Body of pancreas (tissue), 4 donors: ENCODE measurements at regions of chr19 and their contacts with region 1.

Region 1: DNA sequence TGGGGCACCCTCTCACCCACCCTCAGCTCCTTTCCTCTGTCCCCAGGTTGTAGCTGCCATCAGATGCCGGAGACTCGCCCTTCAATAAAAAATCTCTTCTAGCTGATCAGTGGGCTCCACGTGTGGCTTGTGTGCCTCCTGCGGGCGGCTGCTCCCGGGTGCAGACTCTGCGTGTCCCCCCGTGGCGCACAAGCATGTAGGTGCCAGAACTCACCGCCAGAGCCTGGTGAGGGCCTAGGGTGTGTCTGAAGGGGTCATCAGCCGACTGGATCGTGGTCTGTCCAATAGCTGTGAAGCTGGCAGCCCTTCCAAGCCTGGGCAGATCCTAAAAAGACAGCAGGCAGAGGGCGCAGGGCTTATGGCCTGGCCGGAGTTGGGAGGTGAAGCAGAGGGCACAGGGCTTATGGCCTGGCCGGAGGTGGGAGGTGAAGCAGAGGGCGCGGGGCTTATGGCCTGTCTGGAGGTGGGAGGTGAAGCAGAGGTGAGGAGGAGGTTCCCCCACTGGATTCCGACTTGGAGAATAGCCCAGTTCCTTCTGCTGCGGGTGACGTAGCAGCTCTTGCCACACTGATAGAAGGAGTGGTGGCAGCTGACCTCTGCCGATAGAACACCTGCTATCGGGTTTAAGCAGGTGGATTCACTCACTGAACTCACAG is 11.7 kb downstream of the NOP53 start:
- DNase-seq: peak; percentile 55 to 89 (median 78)
- ATAC-seq: peak; percentile 78
- H3K4me3 ChIP-seq: no peak overlapping the region
- H3K27ac ChIP-seq: peak overlapping the region; percentile 11 to 80 (median 44)
- H3K4me1 ChIP-seq: peaks cover 15% of the 10 kb centered on the region
- H3K27me3 ChIP-seq: no peaks in the 10 kb centered on the region
- CTCF ChIP-seq: no peak
- POLR2A ChIP-seq: no peak

Region 2: GRCh38 chr19:47707135-47707925 is 49.8 kb before region 1 on chr19:
- intact Hi-C with region 1: loop called (anchors 5 kb)
- DNase-seq: peak; percentile 74 to 79 (median 78)
- ATAC-seq: peak; percentile 89
- H3K4me3 ChIP-seq: no peak overlapping the region
- H3K27ac ChIP-seq: no peak overlapping the region
- H3K4me1 ChIP-seq: no peaks in the 10 kb centered on the region
- H3K27me3 ChIP-seq: no peaks in the 10 kb centered on the region
- CTCF ChIP-seq: peak; percentile 53 to 86 (median 69)
- POLR2A ChIP-seq: no peak

Region 3: DNA sequence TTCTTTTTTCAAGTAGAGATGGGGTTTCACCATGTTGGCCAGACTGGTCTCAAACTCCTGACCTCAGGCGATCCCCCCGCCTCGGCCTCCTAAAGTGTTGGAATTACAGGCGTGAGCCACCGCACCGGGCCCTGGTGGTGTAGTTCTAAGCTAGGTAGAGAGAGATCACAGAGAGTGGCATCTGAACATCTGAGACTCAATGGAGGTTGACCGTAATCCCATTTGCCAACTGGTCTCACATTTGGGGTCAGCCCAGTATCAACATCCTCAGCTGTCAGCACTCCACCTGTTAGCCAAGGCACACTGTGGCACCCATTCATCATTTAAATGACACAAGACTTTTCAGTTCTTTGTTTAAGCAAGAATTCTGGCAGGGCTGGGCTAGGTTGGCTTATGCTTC is 29.5 kb after region 1 on chr19:
- intact Hi-C with region 1: loop called (anchors 5 kb)
- DNase-seq: no peak
- ATAC-seq: no peak
- H3K4me3 ChIP-seq: no peak overlapping the region
- H3K27ac ChIP-seq: no peak overlapping the region
- H3K4me1 ChIP-seq: peaks cover 11% of the 10 kb centered on the region
- H3K27me3 ChIP-seq: no peaks in the 10 kb centered on the region
- CTCF ChIP-seq: no peak
- POLR2A ChIP-seq: no peak

Region 4: GRCh38 chr19:48041877-48042580 is 284.9 kb after region 1 on chr19:
- intact Hi-C with region 1: no loop called
- DNase-seq: no peak
- ATAC-seq: no peak
- H3K4me3 ChIP-seq: no peak overlapping the region
- H3K27ac ChIP-seq: no peak overlapping the region
- H3K4me1 ChIP-seq: no peaks in the 10 kb centered on the region
- H3K27me3 ChIP-seq: no peaks in the 10 kb centered on the region
- CTCF ChIP-seq: no peak
- POLR2A ChIP-seq: no peak